Heart right ventricle (tissue), 16 donors: ENCODE measurements at regions of chrX and their contacts with region 1.

Region 1: GRCh38 chrX:41561045-41561444 is 113.9 kb downstream of the NYX start:
- DNase-seq: peak in 1 of 2 donors; percentile 31
- ATAC-seq: peak in 6 of 8 donors; percentile 68 to 91 (median 74)
- H3K4me3 ChIP-seq: no peak overlapping the region
- H3K27ac ChIP-seq: peak overlapping the region in 5 of 10 donors; percentile 48 to 77 (median 60)
- H3K4me1 ChIP-seq: peaks cover 0 to 31% (median 6%) of the 10 kb centered on the region in 9 donors
- H3K27me3 ChIP-seq: peaks cover 0 to 32% (median 0%) of the 10 kb centered on the region in 7 donors
- CTCF ChIP-seq: no peak

Region 2: GRCh38 chrX:41734530-41734929 is 173.5 kb after region 1 on chrX:
- intact Hi-C with region 1: loop called in 2 of 10 experiments (anchors 10 kb)
- DNase-seq: no peak
- ATAC-seq: peak in 3 of 8 donors; percentile 26 to 52 (median 51)
- H3K4me3 ChIP-seq: no peak overlapping the region
- H3K27ac ChIP-seq: no peak overlapping the region
- H3K4me1 ChIP-seq: peaks cover 0 to 9% (median 0%) of the 10 kb centered on the region in 9 donors
- H3K27me3 ChIP-seq: peaks cover 0 to 26% (median 0%) of the 10 kb centered on the region in 7 donors
- CTCF ChIP-seq: peak in 8 of 9 donors; percentile 5 to 55 (median 47)